Activated CD4-positive, alpha-beta memory T cell treated with anti-CD3 and anti-CD28 coated beads, Interleukin-2, amount 10 ng/mL, durations not matched to agents 7 days and 5 days (primary cell): ENCODE measurements at regions of chr10 and their contacts with region 1.

Region 1: GRCh38 chr10:6580279-6581029 is 378 bp upstream of the PRKCQ start:
- DNase-seq: peak; percentile 87
- H3K4me3 Mint-ChIP-seq: peak overlapping the region; percentile 87
- H3K27ac Mint-ChIP-seq: peak overlapping the region; percentile 98
- H3K4me1 Mint-ChIP-seq: peaks cover 57% of the 10 kb centered on the region
- H3K27me3 Mint-ChIP-seq: no peaks in the 10 kb centered on the region

Region 2: DNA sequence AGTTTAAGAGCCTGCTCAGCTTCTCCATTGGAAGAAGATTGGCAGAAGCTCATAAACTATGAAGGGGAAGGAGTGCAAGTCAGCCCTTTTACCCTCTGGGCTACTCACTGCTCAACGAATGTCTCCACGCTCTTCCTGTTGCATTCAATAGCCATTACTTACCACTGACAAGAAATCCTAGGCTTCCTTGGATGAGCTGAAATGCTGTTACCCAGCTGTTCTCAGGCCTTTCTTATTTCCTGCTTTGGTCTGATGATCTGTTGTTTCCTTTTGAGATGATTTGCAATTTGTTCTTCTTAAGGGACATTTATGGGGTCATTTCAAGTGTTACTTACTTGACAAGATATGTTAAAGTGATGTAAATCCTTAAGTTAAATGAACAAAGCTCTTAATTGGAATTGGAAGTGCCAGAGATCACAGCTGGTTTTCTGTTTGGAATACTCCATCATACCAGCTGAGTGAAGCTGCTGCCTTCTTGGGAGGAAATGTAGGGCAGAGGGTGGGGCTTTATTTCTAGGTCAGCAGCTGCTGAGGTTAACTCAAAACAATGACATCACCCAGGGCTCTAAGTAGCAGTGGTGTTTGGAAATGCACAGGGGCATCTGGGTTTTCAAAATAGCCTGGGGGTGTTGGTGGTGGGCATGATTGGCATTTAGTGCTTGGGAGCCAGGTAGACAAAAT is 170.3 kb before region 1 on chr10:
- CTCF ChIA-PET with region 1: interaction called, 13 read pairs
- POLR2A ChIA-PET with region 1: interaction called, 9 read pairs
- DNase-seq: peak; percentile 67
- H3K4me3 Mint-ChIP-seq: peak overlapping the region; percentile 68
- H3K27ac Mint-ChIP-seq: peak overlapping the region; percentile 88
- H3K4me1 Mint-ChIP-seq: peaks cover 54% of the 10 kb centered on the region
- H3K27me3 Mint-ChIP-seq: peaks cover 2% of the 10 kb centered on the region

Region 3: GRCh38 chr10:6473901-6474370 is 106.5 kb before region 1 on chr10:
- CTCF ChIA-PET with region 1: interaction called, 17 read pairs
- POLR2A ChIA-PET with region 1: interaction called, 95 read pairs
- DNase-seq: peak; percentile 38
- H3K4me3 Mint-ChIP-seq: peak overlapping the region; percentile 86
- H3K27ac Mint-ChIP-seq: peak overlapping the region; percentile 96
- H3K4me1 Mint-ChIP-seq: peaks cover 66% of the 10 kb centered on the region
- H3K27me3 Mint-ChIP-seq: no peaks in the 10 kb centered on the region

Region 4: DNA sequence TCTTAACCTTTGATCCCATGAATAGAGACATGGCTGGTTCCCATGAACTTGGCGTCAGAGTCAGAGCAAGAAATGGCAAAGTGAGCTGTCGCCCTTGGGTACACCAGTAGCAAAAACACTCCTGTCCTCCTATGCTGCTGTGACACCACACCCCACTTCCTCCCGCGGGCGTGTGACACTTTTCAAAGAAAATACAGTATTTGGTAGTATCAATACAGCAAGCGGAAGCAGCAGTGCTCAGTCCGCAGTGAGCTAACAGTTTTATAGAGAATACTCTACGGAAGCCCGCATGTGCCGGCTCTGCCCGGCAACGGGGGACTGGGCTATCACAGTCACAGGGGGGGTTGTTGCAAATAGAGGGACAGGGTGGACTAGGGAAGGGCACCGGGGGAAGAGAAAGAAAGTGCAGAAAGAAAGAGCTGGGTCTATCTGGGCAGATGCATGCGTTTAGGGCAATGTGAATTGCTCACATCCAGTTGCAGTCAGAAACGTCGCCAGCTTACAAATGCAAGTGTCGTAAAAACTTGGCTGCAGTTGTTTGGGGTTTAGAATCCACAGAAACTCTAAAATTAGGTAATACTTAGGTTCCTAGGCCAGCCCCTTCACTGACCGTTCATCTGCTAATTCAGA is 50.1 kb before region 1 on chr10:
- CTCF ChIA-PET with region 1: interaction called, 18 read pairs
- POLR2A ChIA-PET with region 1: interaction called, 81 read pairs
- DNase-seq: peak; percentile 91
- H3K4me3 Mint-ChIP-seq: peak overlapping the region; percentile 78
- H3K27ac Mint-ChIP-seq: peak overlapping the region; percentile 99
- H3K4me1 Mint-ChIP-seq: peaks cover 84% of the 10 kb centered on the region
- H3K27me3 Mint-ChIP-seq: no peaks in the 10 kb centered on the region

Region 5: GRCh38 chr10:6563075-6563474 is 17.4 kb before region 1 on chr10:
- CTCF ChIA-PET with region 1: interaction called, 15 read pairs
- POLR2A ChIA-PET with region 1: interaction called, 75 read pairs
- DNase-seq: peak; percentile 70
- H3K4me3 Mint-ChIP-seq: peak overlapping the region; percentile 71
- H3K27ac Mint-ChIP-seq: peak overlapping the region; percentile 92
- H3K4me1 Mint-ChIP-seq: peaks cover 90% of the 10 kb centered on the region
- H3K27me3 Mint-ChIP-seq: no peaks in the 10 kb centered on the region

Region 6: DNA sequence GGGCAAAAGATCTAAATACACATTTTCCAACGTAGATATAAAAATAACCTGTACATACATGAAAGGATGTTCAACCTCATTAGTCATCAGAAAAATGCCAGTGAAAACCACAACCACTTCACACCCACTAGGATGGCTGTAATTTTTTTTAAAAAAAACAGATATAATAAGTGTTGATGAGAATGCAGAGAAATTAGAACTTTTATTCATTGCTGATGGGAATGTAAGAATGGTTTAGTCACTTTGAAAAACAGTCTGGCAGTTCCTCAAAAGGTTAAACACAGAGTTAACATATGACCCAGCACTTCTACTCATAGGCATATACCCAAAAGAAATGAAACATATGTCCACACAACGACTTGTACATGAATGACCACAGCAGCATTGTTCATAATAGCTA is 31.9 kb after region 1 on chr10:
- CTCF ChIA-PET with region 1: interaction called, 8 read pairs
- POLR2A ChIA-PET with region 1: interaction called, 46 read pairs
- DNase-seq: no peak
- H3K4me3 Mint-ChIP-seq: no peak overlapping the region
- H3K27ac Mint-ChIP-seq: peak overlapping the region; percentile 61
- H3K4me1 Mint-ChIP-seq: peaks cover 88% of the 10 kb centered on the region
- H3K27me3 Mint-ChIP-seq: no peaks in the 10 kb centered on the region

Region 7: DNA sequence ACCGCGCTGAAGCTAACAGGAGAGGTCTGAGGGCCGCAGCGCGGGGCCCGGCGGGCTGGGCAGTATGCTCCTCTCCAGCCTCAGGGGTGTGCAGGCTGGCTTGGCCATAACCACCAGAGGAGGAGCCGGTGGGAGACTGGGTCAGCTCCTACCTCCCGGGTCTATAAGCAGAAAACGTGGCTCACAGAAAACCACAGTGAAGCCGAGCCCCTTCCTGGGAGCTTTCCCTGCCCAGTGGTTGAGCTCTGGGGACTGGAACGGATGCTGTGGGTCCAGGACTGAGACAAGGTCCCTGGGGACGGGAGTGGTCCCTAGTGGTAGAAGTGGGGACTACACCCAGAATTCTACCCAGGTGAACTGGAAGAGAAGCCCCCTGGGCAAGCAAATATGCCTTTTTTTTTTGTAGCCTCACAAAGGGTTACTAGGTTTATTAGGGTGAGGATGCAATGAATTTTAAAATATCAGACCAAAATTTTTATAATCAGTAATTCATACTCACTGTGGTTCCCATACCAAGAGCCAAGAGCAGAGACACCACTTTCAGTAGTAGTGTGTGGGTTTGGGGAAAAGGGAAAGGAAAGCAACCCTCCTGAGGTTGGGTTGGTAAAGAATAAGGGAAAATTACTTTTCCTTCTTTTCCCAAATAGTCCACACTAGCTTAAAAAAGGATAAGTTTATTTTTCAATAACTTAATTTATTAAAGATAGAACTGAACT is 67.5 kb after region 1 on chr10:
- CTCF ChIA-PET with region 1: interaction called, 31 read pairs
- POLR2A ChIA-PET with region 1: interaction called, 38 read pairs
- DNase-seq: peak; percentile 74
- H3K4me3 Mint-ChIP-seq: no peak overlapping the region
- H3K27ac Mint-ChIP-seq: no peak overlapping the region
- H3K4me1 Mint-ChIP-seq: peaks cover 44% of the 10 kb centered on the region
- H3K27me3 Mint-ChIP-seq: no peaks in the 10 kb centered on the region